Dendritic cell treated with granulocyte-macrophage colony-stimulating factor and Interleukin-4, amounts not matched to agents 40 ng/mL and 50 ng/mL, for 4 days (primary cell): ENCODE measurements at regions of chr14 and their contacts with region 1.

Region 1: DNA sequence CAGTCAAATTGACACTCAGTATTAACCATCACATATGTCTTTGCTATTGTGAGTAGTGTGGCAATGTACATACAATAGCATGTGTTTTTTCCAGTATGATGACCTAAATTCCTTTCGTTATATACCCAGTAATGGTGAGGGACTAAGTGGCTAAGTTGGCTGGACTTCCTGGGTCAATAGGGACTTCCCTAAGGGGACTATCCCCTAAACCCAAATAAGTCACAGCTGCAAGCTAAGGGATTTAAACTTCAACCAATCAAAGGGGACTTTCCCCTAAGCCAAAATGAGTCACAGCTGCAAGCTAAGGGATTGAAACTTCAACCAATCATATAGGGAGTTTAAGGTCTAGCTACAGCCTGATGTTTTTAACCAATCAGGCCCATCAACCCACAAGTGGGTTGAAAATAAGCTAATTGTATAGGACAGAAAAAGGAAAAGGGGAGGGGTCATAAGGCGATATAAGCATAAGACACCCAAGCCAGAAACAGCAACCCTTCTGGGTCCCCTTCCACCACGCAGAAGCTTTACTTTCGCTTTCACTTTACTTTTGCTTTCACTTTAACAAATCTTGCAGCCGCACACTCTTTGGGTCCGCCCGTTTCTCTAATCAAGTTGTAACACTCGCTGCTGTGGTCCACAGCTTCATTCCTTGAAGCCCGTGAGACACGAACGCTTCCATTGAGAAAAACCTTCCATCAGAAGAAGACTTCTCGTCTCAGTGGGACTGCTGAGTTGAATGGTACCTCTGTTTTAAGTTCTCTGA is 404.4 kb downstream of the FLRT2 start:
- H3K4me3 Mint-ChIP-seq: peak overlapping the region; percentile 86
- H3K27ac Mint-ChIP-seq: peak overlapping the region; percentile 95
- H3K4me1 Mint-ChIP-seq: peaks cover 22% of the 10 kb centered on the region
- H3K27me3 Mint-ChIP-seq: no peaks in the 10 kb centered on the region

Region 2: DNA sequence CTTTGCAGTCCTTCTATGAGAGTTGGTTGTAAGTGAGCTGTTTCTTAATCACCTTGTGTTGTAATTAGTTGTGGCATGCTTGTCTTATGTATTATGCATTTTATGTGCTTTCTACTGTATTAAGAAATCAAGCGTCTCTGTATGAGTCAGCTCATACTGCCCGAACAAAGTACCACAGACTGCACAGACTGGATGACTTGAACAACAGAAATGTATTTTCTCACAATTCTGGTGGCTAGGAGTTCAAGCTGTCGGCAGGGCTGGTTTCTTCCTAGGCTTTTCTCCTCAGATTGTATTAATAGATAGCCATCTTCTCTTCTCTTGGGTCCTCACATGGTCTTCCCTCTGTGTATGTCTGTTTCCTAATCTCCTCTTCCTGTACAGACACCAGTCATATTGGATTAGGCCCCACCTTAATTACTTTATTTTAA is 326.6 kb before region 1 on chr14:
- intact Hi-C with region 1: loop called (anchors 10 kb)
- H3K4me3 Mint-ChIP-seq: no peak overlapping the region
- H3K27ac Mint-ChIP-seq: no peak overlapping the region
- H3K4me1 Mint-ChIP-seq: peaks cover 39% of the 10 kb centered on the region
- H3K27me3 Mint-ChIP-seq: no peaks in the 10 kb centered on the region

Region 3: GRCh38 chr14:86038387-86039042 is 104.2 kb after region 1 on chr14:
- intact Hi-C with region 1: no loop called
- H3K4me3 Mint-ChIP-seq: no peak overlapping the region
- H3K27ac Mint-ChIP-seq: no peak overlapping the region
- H3K4me1 Mint-ChIP-seq: no peaks in the 10 kb centered on the region
- H3K27me3 Mint-ChIP-seq: no peaks in the 10 kb centered on the region